Heart left ventricle (tissue), 16 donors: ENCODE measurements at regions of chr12 and their contacts with region 1.

Region 1: DNA sequence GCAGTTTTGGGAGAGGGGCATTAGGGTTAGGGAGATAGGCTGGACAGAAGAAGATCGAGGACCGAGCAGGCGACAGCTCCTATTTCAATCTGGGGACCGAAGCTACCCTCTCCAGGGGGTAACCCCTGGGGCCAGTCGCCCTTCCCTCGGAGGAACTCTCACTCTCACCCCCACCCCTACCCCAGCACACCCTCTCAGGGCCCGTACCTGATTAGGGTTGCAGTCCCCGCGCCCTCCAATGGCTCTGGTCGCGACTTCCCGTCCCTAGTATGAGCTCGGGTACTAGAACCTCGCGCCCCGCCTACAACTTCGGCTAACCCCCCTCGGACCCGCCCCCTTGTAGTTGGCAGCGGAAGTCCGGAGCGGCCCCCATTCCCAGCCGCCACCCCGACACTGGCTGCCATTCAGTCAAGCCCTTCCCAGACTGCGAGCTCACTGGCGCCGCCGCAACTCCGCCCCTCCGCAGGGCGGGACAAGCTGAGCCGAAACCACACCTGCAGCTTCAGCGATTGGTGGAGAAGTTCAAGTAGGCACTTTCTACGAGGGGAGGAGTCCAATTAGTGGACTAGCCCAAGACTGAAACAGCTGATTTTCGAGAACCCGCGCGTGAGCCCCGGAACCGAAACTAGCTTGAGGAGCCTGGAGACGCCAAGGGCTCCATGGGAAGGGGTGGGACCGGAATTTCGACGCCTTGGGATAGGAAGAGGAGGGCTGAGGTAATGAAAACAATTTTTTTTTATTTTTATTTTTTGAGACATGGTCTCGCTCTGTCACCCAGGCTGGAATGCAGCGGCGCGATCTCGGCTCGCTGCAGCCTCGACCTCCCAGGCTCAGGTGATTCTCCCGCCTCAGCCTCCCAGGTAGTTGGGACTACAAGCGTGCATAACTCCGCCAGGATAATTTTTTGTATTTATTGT is at the start of gene STAT2:
- DNase-seq: peak; percentile 99 to 100 (median 99)
- ATAC-seq: peak; percentile 98 to 99 (median 99)
- H3K4me3 ChIP-seq: peak within 1 kb of the TSS; percentile 64 to 91 (median 83)
- H3K27ac ChIP-seq: peak within 1 kb of the TSS; percentile 68 to 98 (median 92)
- H3K4me1 ChIP-seq: peaks cover 0 to 40% (median 20%) of the 10 kb centered on the region in 12 donors
- H3K27me3 ChIP-seq: no peaks in the 10 kb centered on the region
- CTCF ChIP-seq: peak in 1 of 12 donors; percentile 9
- POLR2A ChIP-seq: peak; percentile 17 to 80
- total RNA-seq, gene STAT2: 31.4 to 150 (median 37.1) TPM

Region 2: GRCh38 chr12:56230432-56231183 is 129.5 kb before region 1 on chr12:
- intact Hi-C with region 1: no loop called
- DNase-seq: peak in 1 of 5 donors; percentile 45
- ATAC-seq: peak in 2 of 4 donors; percentile 10 to 37
- H3K4me3 ChIP-seq: no peak overlapping the region
- H3K27ac ChIP-seq: no peak overlapping the region
- H3K4me1 ChIP-seq: no peaks in the 10 kb centered on the region
- H3K27me3 ChIP-seq: no peaks in the 10 kb centered on the region
- CTCF ChIP-seq: no peak
- POLR2A ChIP-seq: no peak

Region 3: GRCh38 chr12:56315622-56316473 is 44.3 kb before region 1 on chr12 and contains the start of gene CNPY2:
- intact Hi-C with region 1: loop called in 2 of 10 experiments (anchors 1 kb)
- DNase-seq: peak; percentile 95 to 97 (median 97)
- ATAC-seq: peak; percentile 93 to 96 (median 96)
- H3K4me3 ChIP-seq: peak within 1 kb of the TSS; percentile 44 to 97 (median 88)
- H3K27ac ChIP-seq: peak within 1 kb of the TSS; percentile 84 to 99 (median 93)
- H3K4me1 ChIP-seq: peaks cover 0 to 20% (median 13%) of the 10 kb centered on the region in 12 donors
- H3K27me3 ChIP-seq: no peaks in the 10 kb centered on the region
- CTCF ChIP-seq: peak in 8 of 12 donors; percentile 14 to 36 (median 24)
- POLR2A ChIP-seq: peak in 1 of 2 donors; percentile 80
- total RNA-seq, gene CNPY2: 26.8 to 61.0 (median 35.6) TPM

Region 4: DNA sequence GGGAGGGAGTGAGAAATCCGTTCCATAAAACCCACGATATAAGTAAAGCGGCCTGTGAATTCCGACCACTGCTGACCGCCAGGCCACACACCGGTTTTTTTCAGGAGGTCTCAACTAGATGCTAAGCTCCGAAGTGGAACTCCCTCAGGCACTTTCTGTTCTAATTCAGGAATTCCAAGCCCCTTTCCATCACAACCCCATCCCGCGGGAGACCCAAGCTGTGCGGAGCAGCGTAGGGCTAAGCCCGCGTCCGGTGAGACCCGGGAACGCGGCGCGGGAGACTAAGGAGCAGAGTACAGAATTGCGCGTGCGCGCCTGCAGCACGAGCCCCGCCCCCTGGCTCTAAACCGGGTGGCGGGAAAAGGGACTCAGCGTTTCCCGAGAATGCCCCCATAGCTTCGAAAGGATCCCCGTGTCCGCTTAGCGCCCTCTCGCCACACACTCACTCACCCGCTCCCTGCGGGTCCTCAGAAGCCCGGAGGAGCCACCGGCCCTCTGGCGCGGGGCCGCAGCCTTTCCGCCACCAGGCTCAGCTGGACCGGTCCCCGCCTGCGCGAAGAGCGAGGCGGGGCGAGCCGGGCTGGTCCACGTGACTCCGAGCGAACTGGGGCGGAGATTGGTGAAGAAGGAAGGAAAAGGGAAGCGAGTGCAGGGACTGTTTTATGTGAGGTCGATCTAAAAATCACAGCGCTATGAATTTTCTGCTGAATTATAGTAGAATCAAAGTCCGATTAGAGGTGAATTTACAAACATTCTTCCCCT is 88.9 kb after region 1 on chr12 and contains the start of gene TIMELESS:
- intact Hi-C with region 1: loop called in 8 of 10 experiments (anchors 2 to 10 kb)
- DNase-seq: peak; percentile 89 to 92 (median 90)
- ATAC-seq: peak; percentile 96 to 99 (median 98)
- H3K4me3 ChIP-seq: peak within 1 kb of the TSS; percentile 46 to 86 (median 69)
- H3K27ac ChIP-seq: peak within 1 kb of the TSS; percentile 69 to 94 (median 86)
- H3K4me1 ChIP-seq: peaks cover 0 to 22% (median 10%) of the 10 kb centered on the region in 12 donors
- H3K27me3 ChIP-seq: no peaks in the 10 kb centered on the region
- CTCF ChIP-seq: peak in 4 of 12 donors; percentile 6 to 16 (median 14)
- POLR2A ChIP-seq: peak in 1 of 2 donors; percentile 50
- total RNA-seq, gene TIMELESS: 1.1 to 7.3 (median 2.4) TPM

Region 5: GRCh38 chr12:56461235-56462159 is 101.4 kb after region 1 on chr12:
- intact Hi-C with region 1: loop called in 5 of 10 experiments (anchors 1 to 10 kb)
- DNase-seq: no peak
- ATAC-seq: no peak
- H3K4me3 ChIP-seq: no peak overlapping the region
- H3K27ac ChIP-seq: no peak overlapping the region
- H3K4me1 ChIP-seq: peaks cover 0 to 7% (median 0%) of the 10 kb centered on the region in 12 donors
- H3K27me3 ChIP-seq: no peaks in the 10 kb centered on the region
- CTCF ChIP-seq: no peak
- POLR2A ChIP-seq: no peak